CD4-positive, alpha-beta memory T cell (primary cell): ENCODE measurements at regions of chr2 and their contacts with region 1.

Region 1: DNA sequence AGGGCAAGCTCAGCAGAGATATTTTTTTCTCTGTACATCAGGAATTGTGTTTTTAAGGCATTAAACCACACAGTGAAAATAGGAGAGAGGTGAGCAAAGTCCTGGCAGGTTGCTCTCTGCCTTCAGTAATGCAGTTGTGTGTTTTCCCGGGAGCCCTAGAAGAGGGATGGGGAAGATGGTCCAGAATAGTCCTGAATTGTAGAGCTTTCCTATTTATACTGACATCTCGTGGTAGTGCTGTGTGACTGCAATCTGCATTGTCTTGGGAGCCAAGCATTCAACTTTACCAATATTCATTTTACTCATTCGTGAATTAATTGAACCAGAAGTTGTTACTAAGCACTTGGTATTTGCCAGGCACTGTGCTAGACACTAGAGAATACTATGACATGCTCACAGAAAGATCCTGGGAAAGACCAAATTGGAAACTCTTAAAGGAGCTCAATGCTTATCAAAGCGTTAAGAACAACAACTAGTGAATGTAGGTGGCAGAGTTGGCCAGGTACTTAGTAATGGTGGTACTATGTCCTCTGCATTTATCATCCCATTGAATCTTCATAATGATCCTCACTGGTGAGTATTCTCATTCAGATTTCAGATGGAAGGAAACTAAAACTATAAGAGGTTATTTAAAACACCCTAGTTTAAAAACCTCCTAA is 214.6 kb downstream of the TRIB2 start:
- DNase-seq: peak in 4 of 5 donors; percentile 13 to 25 (median 22)
- H3K4me3 ChIP-seq: no peak overlapping the region
- H3K4me3 Mint-ChIP-seq: no peak overlapping the region
- H3K27ac ChIP-seq: no peak overlapping the region
- H3K27ac Mint-ChIP-seq: no peak overlapping the region
- H3K4me1 ChIP-seq: peaks cover 15% of the 10 kb centered on the region
- H3K4me1 Mint-ChIP-seq: peaks cover 11 to 23% (median 17%) of the 10 kb centered on the region in 4 donors
- H3K27me3 ChIP-seq: no peaks in the 10 kb centered on the region
- H3K27me3 Mint-ChIP-seq: no peaks in the 10 kb centered on the region

Region 2: DNA sequence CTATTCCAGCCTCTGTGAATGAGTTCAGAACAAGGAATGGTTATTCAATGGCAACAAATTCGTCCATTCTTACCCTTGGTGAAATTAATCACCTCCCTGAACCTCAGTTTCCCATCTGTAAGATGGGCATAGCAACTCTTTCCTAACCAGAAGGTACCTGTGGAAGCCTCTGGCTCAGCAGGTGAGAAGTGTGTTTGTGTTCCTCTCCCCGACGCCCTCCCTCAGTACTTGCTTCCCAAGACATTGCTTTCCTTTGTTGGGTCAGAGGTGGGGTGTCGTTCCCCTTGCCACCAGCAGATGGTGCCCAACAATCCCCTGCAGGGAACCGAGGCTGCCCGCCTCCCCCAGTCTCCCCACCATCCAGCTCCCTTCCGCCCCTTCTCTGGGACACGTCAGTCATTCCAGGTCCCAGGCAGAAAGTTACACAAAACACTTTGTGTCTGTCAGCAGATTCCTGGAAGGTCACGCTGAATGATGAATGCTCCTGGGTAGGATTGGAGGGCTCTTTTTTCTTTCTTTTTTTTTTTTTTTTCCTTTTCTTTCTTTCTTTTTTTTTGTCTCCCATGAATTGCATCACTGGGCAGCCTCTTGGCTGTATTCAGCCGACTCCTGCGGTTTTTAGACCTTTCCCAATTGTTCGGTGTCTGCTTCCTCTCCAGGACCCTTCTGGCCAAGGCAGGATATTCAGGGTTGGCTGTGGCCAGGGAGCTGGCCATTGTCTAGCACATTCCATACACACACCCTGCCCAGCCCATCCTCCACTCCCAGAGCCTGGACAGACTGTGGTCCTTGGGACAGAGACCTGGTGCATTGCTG is 1067.6 kb before region 1 on chr2:
- CTCF ChIA-PET with region 1: interaction called, 6 read pairs
- POLR2A ChIA-PET with region 1: no interaction called
- intact Hi-C with region 1: loop called (anchors 1 kb)
- DNase-seq: peak; percentile 59 to 67 (median 63)
- H3K4me3 ChIP-seq: peak overlapping the region in 1 of 2 donors; percentile 18
- H3K4me3 Mint-ChIP-seq: peak overlapping the region; percentile 54 to 87 (median 72)
- H3K27ac ChIP-seq: peak overlapping the region; percentile 3
- H3K27ac Mint-ChIP-seq: peak overlapping the region in 3 of 7 donors; percentile 26 to 50 (median 31)
- H3K4me1 ChIP-seq: peaks cover 25% of the 10 kb centered on the region
- H3K4me1 Mint-ChIP-seq: peaks cover 19 to 38% (median 23%) of the 10 kb centered on the region in 4 donors
- H3K27me3 ChIP-seq: no peaks in the 10 kb centered on the region
- H3K27me3 Mint-ChIP-seq: no peaks in the 10 kb centered on the region

Region 3: DNA sequence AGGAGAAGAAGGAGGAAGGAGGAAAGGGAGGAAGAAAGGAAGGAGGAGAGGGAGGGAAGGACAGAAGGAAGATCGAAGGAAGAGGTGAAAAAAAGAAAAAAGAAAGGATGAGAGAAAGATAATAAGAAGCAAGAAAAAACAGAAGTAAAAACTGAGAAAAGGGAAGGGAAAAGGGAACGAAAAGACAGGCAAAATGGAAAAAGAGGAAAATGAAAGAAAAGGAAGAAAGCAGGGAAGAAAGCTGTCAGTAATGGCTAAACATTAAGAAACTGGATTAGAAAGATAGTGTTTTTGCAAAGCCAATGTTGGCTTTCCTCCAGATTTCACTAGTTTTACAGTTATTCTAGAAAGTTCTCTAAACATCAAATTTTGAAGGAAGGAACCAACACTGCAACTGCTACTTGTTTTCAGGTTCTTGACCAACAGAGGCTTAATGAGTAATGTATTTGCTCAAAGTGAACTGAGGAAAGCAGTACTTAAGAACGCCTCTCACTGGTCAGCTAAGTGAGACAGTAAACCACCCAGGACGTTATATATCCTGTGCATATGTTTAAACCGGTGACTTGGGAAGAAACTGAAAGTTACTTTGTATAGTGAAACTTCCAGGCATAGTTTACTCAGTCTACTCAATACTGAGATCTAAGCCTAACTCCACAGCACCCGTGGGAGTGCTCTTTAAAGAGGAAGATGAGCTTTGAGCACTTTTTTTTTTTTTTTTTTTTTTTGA is 500.7 kb before region 1 on chr2:
- CTCF ChIA-PET with region 1: interaction called, 15 read pairs
- POLR2A ChIA-PET with region 1: no interaction called
- intact Hi-C with region 1: no loop called
- DNase-seq: peak in 3 of 5 donors; percentile 9 to 26 (median 21)
- H3K4me3 ChIP-seq: peak overlapping the region in 1 of 2 donors; percentile 27
- H3K4me3 Mint-ChIP-seq: peak overlapping the region; percentile 50 to 83 (median 78)
- H3K27ac ChIP-seq: no peak overlapping the region
- H3K27ac Mint-ChIP-seq: peak overlapping the region; percentile 59 to 93 (median 88)
- H3K4me1 ChIP-seq: peaks cover 28% of the 10 kb centered on the region
- H3K4me1 Mint-ChIP-seq: peaks cover 19 to 44% (median 29%) of the 10 kb centered on the region in 4 donors
- H3K27me3 ChIP-seq: no peaks in the 10 kb centered on the region
- H3K27me3 Mint-ChIP-seq: no peaks in the 10 kb centered on the region

Region 4: GRCh38 chr2:12709207-12709522 is 222.2 kb before region 1 on chr2:
- CTCF ChIA-PET with region 1: interaction called, 19 read pairs
- POLR2A ChIA-PET with region 1: no interaction called
- intact Hi-C with region 1: no loop called
- DNase-seq: peak; percentile 65 to 78 (median 72)
- H3K4me3 ChIP-seq: no peak overlapping the region
- H3K4me3 Mint-ChIP-seq: peak overlapping the region in 6 of 8 donors; percentile 20 to 79 (median 70)
- H3K27ac ChIP-seq: peak overlapping the region; percentile 44
- H3K27ac Mint-ChIP-seq: peak overlapping the region; percentile 87 to 98 (median 92)
- H3K4me1 ChIP-seq: peaks cover 76% of the 10 kb centered on the region
- H3K4me1 Mint-ChIP-seq: peaks cover 50 to 85% (median 72%) of the 10 kb centered on the region in 4 donors
- H3K27me3 ChIP-seq: no peaks in the 10 kb centered on the region
- H3K27me3 Mint-ChIP-seq: no peaks in the 10 kb centered on the region

Region 5: DNA sequence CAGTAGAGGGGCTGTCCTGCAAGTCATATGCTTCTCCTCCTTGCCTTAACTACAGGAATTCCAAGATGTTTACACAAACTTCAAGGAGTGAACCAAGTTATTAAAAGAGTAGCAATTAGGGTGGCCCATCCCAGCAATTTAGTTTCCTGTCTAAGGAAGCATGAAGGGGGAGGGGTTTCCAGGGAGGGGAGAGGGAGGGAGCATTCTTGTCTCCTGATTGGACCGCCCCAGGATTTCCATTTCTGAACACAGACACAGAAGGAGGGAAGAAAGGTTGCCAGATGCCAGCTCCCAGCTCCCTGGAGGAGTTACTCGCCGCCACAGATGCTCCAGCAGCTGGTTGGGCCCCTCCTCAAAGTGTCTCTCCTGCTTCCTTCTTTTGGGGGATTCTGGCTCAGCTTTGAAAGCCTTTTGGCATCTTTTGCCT is 107.0 kb before region 1 on chr2:
- CTCF ChIA-PET with region 1: interaction called, 4 read pairs
- POLR2A ChIA-PET with region 1: no interaction called
- intact Hi-C with region 1: loop called (anchors 5 kb)
- DNase-seq: no peak
- H3K4me3 ChIP-seq: no peak overlapping the region
- H3K4me3 Mint-ChIP-seq: no peak overlapping the region
- H3K27ac ChIP-seq: no peak overlapping the region
- H3K27ac Mint-ChIP-seq: peak overlapping the region in 1 of 7 donors; percentile 73
- H3K4me1 ChIP-seq: peaks cover 14% of the 10 kb centered on the region
- H3K4me1 Mint-ChIP-seq: peaks cover 9 to 28% (median 18%) of the 10 kb centered on the region in 4 donors
- H3K27me3 ChIP-seq: no peaks in the 10 kb centered on the region
- H3K27me3 Mint-ChIP-seq: no peaks in the 10 kb centered on the region

Region 6: GRCh38 chr2:12870672-12871071 is 60.6 kb before region 1 on chr2:
- CTCF ChIA-PET with region 1: interaction called, 10 read pairs
- POLR2A ChIA-PET with region 1: no interaction called
- intact Hi-C with region 1: no loop called
- DNase-seq: no peak
- H3K4me3 ChIP-seq: no peak overlapping the region
- H3K4me3 Mint-ChIP-seq: no peak overlapping the region
- H3K27ac ChIP-seq: no peak overlapping the region
- H3K27ac Mint-ChIP-seq: no peak overlapping the region
- H3K4me1 ChIP-seq: no peaks in the 10 kb centered on the region
- H3K4me1 Mint-ChIP-seq: peaks cover 0 to 6% (median 4%) of the 10 kb centered on the region in 4 donors
- H3K27me3 ChIP-seq: no peaks in the 10 kb centered on the region
- H3K27me3 Mint-ChIP-seq: peaks cover 3 to 6% of the 10 kb centered on the region in 2 donors

Region 7: GRCh38 chr2:13266166-13266565 is 334.9 kb after region 1 on chr2:
- CTCF ChIA-PET with region 1: no interaction called
- POLR2A ChIA-PET with region 1: no interaction called
- intact Hi-C with region 1: no loop called
- DNase-seq: no peak
- H3K4me3 ChIP-seq: no peak overlapping the region
- H3K4me3 Mint-ChIP-seq: no peak overlapping the region
- H3K27ac ChIP-seq: no peak overlapping the region
- H3K27ac Mint-ChIP-seq: no peak overlapping the region
- H3K4me1 ChIP-seq: no peaks in the 10 kb centered on the region
- H3K4me1 Mint-ChIP-seq: no peaks in the 10 kb centered on the region
- H3K27me3 ChIP-seq: no peaks in the 10 kb centered on the region
- H3K27me3 Mint-ChIP-seq: no peaks in the 10 kb centered on the region